ENCODE measurements at regions of chr16 and their contacts with region 1.

Region 1: GRCh38 chr16:22077700-22078313 is 14.5 kb upstream of the VWA3A start:
- DNase-seq: peak; percentile 67
- CTCF ChIP-seq: peak; percentile 66

Region 2: DNA sequence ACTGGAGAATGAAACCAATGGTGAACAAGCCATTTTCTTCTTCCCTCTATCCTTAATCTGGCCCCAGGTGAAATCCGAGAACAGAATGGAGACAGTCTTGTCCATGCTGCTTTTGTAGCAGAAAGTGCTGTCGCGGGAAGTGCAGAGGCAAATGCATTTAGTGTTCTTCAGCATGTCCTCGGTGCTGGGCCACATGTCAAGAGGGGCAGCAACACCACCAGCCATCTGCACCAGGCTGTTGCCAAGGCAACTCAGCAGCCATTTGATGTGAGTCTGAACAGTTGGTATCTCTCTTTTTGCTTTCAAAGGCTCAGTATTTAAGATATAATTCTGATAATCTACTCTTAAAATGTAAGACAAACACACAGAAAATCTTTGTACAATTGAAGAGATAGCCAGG is 106.0 kb before region 1 on chr16:
- CTCF ChIA-PET with region 1: interaction called, 10 read pairs
- POLR2A ChIA-PET with region 1: no interaction called
- DNase-seq: no peak
- CTCF ChIP-seq: no peak

Region 3: GRCh38 chr16:22007509-22008214 is 70.1 kb before region 1 on chr16 and contains the start of gene MOSMO:
- CTCF ChIA-PET with region 1: interaction called, 313 read pairs
- POLR2A ChIA-PET with region 1: no interaction called
- DNase-seq: peak; percentile 89
- CTCF ChIP-seq: no peak

Region 4: GRCh38 chr16:22035153-22035552 is 42.7 kb before region 1 on chr16:
- CTCF ChIA-PET with region 1: interaction called, 37 read pairs
- POLR2A ChIA-PET with region 1: no interaction called
- DNase-seq: peak; percentile 46
- CTCF ChIP-seq: no peak

Region 5: GRCh38 chr16:22091758-22092600 is 14.2 kb after region 1 on chr16 and contains the start of gene VWA3A:
- CTCF ChIA-PET with region 1: interaction called, 40 read pairs
- POLR2A ChIA-PET with region 1: no interaction called
- DNase-seq: no peak
- CTCF ChIP-seq: no peak

Region 6: DNA sequence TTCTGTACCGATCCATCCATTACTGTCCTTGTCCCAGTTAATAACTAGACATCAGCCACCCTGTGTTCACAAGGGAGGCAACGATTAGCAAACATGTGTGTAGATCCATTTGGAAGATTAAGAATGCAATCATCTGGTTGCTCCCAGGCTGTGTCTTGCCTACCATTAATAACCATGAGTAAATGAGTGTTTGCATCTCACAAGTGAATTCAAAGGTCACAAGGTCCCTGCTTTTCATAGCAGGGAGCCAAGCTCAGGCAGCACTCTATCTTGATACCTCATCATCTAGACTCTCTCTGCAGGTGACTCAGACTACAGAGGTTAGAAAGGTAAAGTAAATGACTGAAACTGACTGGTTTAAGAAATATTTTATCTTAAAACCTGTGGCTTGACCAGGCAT is 39.8 kb after region 1 on chr16:
- CTCF ChIA-PET with region 1: interaction called, 14 read pairs
- POLR2A ChIA-PET with region 1: no interaction called
- DNase-seq: no peak
- CTCF ChIP-seq: no peak

Region 7: DNA sequence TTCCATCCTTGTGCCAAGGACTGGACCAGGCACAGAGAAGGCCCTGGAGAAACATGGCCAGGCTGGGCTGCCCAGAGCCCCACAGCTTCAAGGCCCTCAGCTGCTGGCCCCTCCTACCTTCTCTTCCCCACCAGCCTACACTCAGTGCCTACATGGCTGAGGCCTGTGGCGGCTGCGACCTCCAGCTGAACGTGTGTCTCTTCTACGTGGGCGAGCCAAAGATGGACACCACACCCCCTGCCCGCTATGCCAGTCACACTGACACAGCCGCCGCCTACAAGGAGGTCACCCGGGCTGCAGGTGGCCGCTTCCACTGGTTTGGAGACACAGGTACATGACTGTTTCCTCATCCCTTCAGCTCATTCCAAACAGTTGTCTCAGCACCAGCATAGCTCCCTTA is 55.0 kb after region 1 on chr16:
- CTCF ChIA-PET with region 1: no interaction called
- POLR2A ChIA-PET with region 1: no interaction called
- DNase-seq: no peak
- CTCF ChIP-seq: no peak

Region 8: DNA sequence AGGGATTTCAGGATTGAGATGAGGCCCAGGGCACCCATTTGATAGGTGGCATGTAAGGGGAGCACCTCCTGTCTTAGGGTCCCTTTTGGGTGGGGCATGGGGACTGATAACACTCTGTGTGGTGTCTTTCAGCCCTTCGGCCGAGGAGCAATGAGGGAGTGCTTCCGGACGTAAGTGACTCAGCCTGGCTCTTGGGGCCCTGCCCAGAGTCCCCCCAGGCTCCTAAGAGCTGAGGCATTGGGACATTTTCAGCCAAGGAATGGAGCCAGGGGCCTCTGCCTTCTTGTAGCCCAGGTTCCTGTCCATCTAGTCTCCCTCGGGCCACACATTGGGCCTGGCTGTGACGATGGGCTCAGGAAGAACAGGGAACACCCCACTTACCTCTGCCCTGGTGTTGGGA is 172.7 kb after region 1 on chr16:
- CTCF ChIA-PET with region 1: no interaction called
- POLR2A ChIA-PET with region 1: no interaction called
- DNase-seq: no peak
- CTCF ChIP-seq: no peak